B cell (primary cell): ENCODE measurements at regions of chr14 and their contacts with region 1.

Region 1: DNA sequence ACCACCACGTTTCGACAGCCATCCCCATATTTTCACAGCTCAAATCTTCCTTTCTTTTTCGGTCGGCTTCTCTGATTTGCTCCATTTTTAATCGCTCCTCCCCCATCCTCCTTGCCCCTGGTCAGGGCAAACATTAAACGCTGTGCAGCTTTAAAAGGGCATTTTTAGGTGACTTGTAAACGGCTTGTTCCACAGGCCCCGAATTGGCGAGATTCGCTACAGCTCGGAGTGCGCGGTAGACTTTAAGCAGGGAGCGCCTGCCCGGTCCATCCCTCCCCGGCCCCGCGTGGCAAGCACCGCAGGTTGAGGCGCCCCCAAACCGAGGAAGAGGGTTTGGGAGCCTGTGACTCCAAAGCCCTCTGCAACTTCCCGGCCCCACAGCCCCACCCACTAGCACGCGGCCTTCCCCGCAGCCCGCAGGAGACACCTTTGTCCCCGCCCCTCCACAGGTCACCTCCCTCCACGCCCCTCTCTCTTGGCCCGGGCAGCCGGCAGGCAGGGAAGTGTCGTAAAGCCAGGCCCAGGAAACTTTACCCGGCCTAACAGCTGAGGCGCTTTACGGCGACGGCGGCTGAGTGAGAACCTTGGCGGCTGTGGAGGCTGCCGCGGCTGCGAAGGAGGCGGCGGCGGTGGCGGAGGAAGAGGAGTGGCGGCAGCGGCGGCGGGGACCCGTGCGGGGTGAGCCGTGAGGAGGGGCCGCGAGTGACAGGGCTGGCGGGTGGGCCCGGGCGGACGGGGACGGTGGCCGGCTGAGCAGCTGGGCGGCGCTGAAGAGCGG is at the start of gene NAA30:
- DNase-seq: peak; percentile 96
- ATAC-seq: peak; percentile 95
- H3K4me3 ChIP-seq: peak within 1 kb of the TSS; percentile 71 to 97 (median 81)
- H3K4me3 Mint-ChIP-seq: peak within 1 kb of the TSS; percentile 88
- H3K27ac ChIP-seq: peak within 1 kb of the TSS; percentile 82 to 89
- H3K27ac Mint-ChIP-seq: peak within 1 kb of the TSS; percentile 87
- H3K4me1 ChIP-seq: peaks cover 19 to 28% of the 10 kb centered on the region in 2 donors
- H3K4me1 Mint-ChIP-seq: peaks cover 42% of the 10 kb centered on the region
- H3K27me3 ChIP-seq: no peaks in the 10 kb centered on the region
- H3K27me3 Mint-ChIP-seq: peaks cover 2% of the 10 kb centered on the region
- CTCF ChIP-seq: no peak
- total RNA-seq, gene NAA30: 13.3 and 14.7 TPM in 2 replicates

Region 2: GRCh38 chr14:55579724-55580469 is 1810.3 kb before region 1 on chr14 and contains the start of gene KTN1:
- CTCF ChIA-PET with region 1: no interaction called
- POLR2A ChIA-PET with region 1: no interaction called
- intact Hi-C with region 1: loop called (anchors 5 kb)
- DNase-seq: peak; percentile 91
- ATAC-seq: peak; percentile 90
- H3K4me3 ChIP-seq: peak within 1 kb of the TSS; percentile 72 to 96 (median 85)
- H3K4me3 Mint-ChIP-seq: peak within 1 kb of the TSS; percentile 96
- H3K27ac ChIP-seq: peak within 1 kb of the TSS; percentile 59 to 91
- H3K27ac Mint-ChIP-seq: peak within 1 kb of the TSS; percentile 96
- H3K4me1 ChIP-seq: peaks cover 37 to 39% of the 10 kb centered on the region in 2 donors
- H3K4me1 Mint-ChIP-seq: peaks cover 29% of the 10 kb centered on the region
- H3K27me3 ChIP-seq: no peaks in the 10 kb centered on the region
- H3K27me3 Mint-ChIP-seq: no peaks in the 10 kb centered on the region
- CTCF ChIP-seq: no peak
- total RNA-seq, gene KTN1: 120 and 123 TPM in 2 replicates

Region 3: DNA sequence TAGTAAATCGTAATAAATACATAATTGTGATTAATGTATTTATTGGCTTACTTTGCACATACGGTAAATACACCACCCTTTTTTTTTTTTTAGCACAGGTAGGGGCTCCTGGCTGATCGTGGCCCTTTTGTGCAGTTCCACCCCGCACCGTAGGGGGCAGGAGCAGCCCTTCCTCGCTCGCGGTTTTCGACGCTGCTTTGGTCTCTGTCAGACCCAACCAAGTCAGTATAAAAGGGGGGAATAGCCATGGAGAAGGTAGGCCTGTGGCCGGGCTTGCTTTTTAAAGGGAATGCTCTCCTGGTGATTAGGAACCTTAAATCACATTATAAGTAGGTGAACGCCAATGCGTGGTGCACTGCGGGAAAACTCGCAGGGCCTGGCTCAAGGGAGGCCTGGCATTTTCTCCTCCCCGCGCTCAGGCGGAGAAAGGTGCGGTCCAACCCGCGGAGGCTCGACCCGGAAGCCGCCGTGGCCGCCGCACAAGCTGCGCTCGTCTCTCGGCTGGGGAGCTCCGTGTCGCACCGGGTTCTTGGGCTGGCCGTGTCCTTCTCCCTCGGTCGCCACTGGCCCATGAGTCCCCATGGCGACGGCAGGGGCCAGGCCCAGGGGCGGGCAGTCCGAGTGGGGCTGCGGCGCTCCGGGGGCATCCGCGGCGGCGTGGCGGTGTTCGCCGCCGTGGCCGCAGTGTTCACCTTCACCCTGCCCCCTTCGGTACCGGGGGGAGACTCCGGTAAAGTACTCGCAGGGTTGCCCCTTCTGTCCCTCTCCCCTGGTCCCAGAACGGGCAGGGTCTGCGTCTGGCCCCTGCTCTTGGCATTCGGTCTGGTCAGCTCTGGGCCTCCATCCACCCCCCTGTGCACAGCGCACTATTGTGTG is 810.6 kb before region 1 on chr14 and contains the start of gene TMEM260:
- CTCF ChIA-PET with region 1: no interaction called
- POLR2A ChIA-PET with region 1: no interaction called
- intact Hi-C with region 1: loop called (anchors 1 kb)
- DNase-seq: peak; percentile 97
- ATAC-seq: peak; percentile 94
- H3K4me3 ChIP-seq: peak within 1 kb of the TSS; percentile 75 to 97 (median 90)
- H3K4me3 Mint-ChIP-seq: peak within 1 kb of the TSS; percentile 96
- H3K27ac ChIP-seq: peak within 1 kb of the TSS; percentile 78 to 91
- H3K27ac Mint-ChIP-seq: peak within 1 kb of the TSS; percentile 98
- H3K4me1 ChIP-seq: peaks cover 23 to 24% of the 10 kb centered on the region in 2 donors
- H3K4me1 Mint-ChIP-seq: peaks cover 38% of the 10 kb centered on the region
- H3K27me3 ChIP-seq: peaks cover 0 to 4% (median 0%) of the 10 kb centered on the region in 4 experiments
- H3K27me3 Mint-ChIP-seq: peaks cover 3% of the 10 kb centered on the region
- CTCF ChIP-seq: peak; percentile 97
- total RNA-seq, gene TMEM260: 33.9 and 39.3 TPM in 2 replicates

Region 4: DNA sequence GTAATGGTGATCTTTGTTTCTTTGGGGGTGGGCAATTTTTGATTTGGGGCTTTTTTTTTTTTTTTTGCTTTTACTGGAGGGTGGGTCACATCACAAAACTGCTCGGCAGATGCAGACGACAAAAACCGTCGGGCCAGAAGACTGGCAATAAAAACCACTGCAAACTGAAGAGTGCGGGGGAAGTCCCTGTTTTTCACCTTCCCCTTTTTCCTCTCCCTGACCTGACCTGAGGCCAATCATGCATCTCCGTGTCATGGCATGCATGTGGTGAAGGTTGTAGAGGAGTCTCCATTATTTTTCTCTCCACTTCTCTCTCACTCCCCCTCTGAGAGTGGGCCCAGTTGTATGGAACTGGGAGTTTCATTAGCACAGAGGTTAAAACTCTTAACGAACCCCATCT is 64.0 kb before region 1 on chr14:
- CTCF ChIA-PET with region 1: no interaction called
- POLR2A ChIA-PET with region 1: no interaction called
- intact Hi-C with region 1: loop called (anchors 2 kb)
- DNase-seq: peak; percentile 54
- ATAC-seq: peak; percentile 90
- H3K4me3 ChIP-seq: no peak overlapping the region
- H3K4me3 Mint-ChIP-seq: no peak overlapping the region
- H3K27ac ChIP-seq: no peak overlapping the region
- H3K27ac Mint-ChIP-seq: peak overlapping the region; percentile 46
- H3K4me1 ChIP-seq: peaks cover 5 to 7% of the 10 kb centered on the region in 2 donors
- H3K4me1 Mint-ChIP-seq: peaks cover 10% of the 10 kb centered on the region
- H3K27me3 ChIP-seq: peaks cover 0 to under 1% (median 0%) of the 10 kb centered on the region in 4 experiments
- H3K27me3 Mint-ChIP-seq: peaks cover 13% of the 10 kb centered on the region
- CTCF ChIP-seq: no peak

Region 5: DNA sequence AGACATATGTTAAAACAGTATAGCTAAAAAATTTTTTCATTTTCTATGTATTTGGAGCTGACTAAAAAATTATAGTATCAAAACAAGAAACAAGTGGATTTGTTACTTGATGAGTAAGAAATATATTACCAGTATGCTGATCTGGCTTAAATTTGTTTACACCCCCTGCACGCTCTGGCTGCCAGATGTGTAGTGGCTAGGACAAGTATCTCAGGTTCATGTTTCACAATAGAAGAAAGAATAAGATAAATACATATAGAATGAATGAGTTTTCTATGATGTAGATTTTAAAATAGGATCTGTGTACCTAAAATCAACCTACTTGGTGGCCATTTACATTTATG is 13.3 kb after region 1 on chr14:
- CTCF ChIA-PET with region 1: no interaction called
- POLR2A ChIA-PET with region 1: no interaction called
- intact Hi-C with region 1: no loop called
- DNase-seq: no peak
- ATAC-seq: no peak
- H3K4me3 ChIP-seq: no peak overlapping the region
- H3K4me3 Mint-ChIP-seq: no peak overlapping the region
- H3K27ac ChIP-seq: no peak overlapping the region
- H3K27ac Mint-ChIP-seq: no peak overlapping the region
- H3K4me1 ChIP-seq: no peaks in the 10 kb centered on the region
- H3K4me1 Mint-ChIP-seq: peaks cover 11% of the 10 kb centered on the region
- H3K27me3 ChIP-seq: no peaks in the 10 kb centered on the region
- H3K27me3 Mint-ChIP-seq: no peaks in the 10 kb centered on the region
- CTCF ChIP-seq: no peak

Region 6: GRCh38 chr14:57533214-57533613 is 143.0 kb after region 1 on chr14:
- CTCF ChIA-PET with region 1: no interaction called
- POLR2A ChIA-PET with region 1: no interaction called
- intact Hi-C with region 1: no loop called
- DNase-seq: no peak
- ATAC-seq: no peak
- H3K4me3 ChIP-seq: no peak overlapping the region
- H3K4me3 Mint-ChIP-seq: no peak overlapping the region
- H3K27ac ChIP-seq: no peak overlapping the region
- H3K27ac Mint-ChIP-seq: no peak overlapping the region
- H3K4me1 ChIP-seq: no peaks in the 10 kb centered on the region
- H3K4me1 Mint-ChIP-seq: no peaks in the 10 kb centered on the region
- H3K27me3 ChIP-seq: no peaks in the 10 kb centered on the region
- H3K27me3 Mint-ChIP-seq: peaks cover 24% of the 10 kb centered on the region
- CTCF ChIP-seq: no peak

Region 7: DNA sequence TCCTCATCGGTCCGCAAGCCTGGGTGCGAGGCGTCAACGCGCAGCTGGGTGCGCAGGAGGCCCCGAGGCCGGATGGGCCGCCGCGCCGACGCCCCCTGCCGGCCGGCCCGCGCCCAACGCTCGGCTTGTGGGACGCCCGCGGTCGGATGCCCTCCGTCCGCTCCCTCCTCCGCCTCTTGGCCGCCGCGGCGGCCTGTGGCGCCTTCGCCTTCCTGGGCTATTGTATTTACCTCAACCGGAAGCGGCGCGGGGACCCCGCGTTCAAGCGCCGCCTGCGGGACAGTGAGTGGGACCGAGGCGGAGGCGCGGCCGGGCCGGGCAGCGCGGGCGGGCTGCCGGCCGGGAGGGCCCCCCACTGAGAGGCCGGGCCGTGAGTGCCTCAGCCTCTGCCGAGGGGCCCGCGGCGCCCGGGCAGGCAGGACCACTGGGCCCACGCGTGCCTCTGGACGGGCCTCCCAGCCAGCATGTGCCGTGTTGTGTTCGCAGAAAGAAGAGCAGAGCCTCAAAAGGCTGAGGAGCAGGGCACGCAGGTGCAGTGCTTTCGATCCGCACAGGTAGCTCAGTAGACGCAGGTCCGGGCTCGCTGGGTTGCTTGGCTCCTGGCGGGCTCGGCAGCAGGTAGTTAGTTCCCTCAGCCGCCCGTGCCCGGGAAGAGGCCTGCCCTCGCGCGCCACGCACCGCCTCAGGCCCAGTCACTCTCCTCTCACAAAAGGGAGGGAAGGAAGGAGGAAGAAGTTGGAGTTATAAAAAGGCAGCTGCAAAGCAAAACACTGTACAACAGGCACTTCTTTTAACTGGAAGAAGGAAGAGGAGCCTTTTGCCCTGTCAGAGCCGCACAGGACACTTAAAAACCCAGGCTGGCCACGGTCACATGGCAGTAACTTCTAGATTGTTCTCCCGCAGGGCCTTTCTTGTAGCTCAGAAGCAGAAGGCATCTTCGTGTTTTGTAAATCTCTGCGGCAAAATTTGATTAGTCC is 1005.9 kb after region 1 on chr14 and contains the start of gene TOMM20L:
- CTCF ChIA-PET with region 1: no interaction called
- POLR2A ChIA-PET with region 1: no interaction called
- intact Hi-C with region 1: loop called (anchors 5 kb)
- DNase-seq: peak; percentile 89
- ATAC-seq: peak; percentile 90
- H3K4me3 ChIP-seq: peak within 1 kb of the TSS; percentile 36 to 77 (median 66)
- H3K4me3 Mint-ChIP-seq: peak within 1 kb of the TSS; percentile 87
- H3K27ac ChIP-seq: peak within 1 kb of the TSS; percentile 55 to 76
- H3K27ac Mint-ChIP-seq: peak within 1 kb of the TSS; percentile 87
- H3K4me1 ChIP-seq: peaks cover 9 to 14% of the 10 kb centered on the region in 2 donors
- H3K4me1 Mint-ChIP-seq: peaks cover 13% of the 10 kb centered on the region
- H3K27me3 ChIP-seq: no peaks in the 10 kb centered on the region
- H3K27me3 Mint-ChIP-seq: no peaks in the 10 kb centered on the region
- CTCF ChIP-seq: peak; percentile 93
- total RNA-seq, gene TOMM20L: 0.70 and 1.3 TPM in 2 replicates